ENCODE measurements at regions of chr4 and their contacts with region 1.

Region 1: DNA sequence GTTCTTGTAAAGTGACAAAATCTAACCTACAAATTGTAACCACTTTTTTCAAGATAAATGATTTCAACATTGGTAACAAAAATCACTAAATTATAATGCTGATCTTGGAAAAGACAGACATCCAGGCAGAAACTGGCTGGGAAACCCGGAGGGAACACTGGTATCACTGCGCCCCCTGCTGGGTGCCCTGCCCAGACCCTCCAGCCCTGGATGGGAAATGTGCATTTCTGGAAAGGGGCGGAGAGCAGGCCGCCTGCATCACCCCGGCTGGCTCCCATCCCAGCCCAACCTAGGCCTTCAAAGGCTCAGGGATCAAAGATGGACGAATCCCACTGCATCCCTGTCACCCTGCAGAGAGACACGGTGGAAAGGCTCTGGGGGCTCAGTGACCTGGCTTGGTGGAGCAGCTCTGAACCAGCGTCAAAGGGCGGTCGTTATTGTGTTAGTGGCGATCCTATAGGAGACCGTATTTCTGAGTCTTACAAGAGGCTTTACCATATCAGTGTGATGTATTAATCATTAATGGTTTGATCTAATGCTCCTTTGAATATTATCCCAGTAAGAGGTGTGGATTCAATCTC is 37.3 kb downstream of the ACOX3 start:
- DNase-seq: peak; percentile 88 to 91
- ATAC-seq: peak; percentile 71 to 93 (median 86)
- H3K4me3 ChIP-seq: no peak overlapping the region
- H3K27ac ChIP-seq: peak overlapping the region; percentile 21 to 92 (median 80)
- H3K4me1 ChIP-seq: peaks cover 10 to 46% (median 32%) of the 10 kb centered on the region in 9 donors
- H3K27me3 ChIP-seq: no peaks in the 10 kb centered on the region
- CTCF ChIP-seq: peak; percentile 83 to 99 (median 94)

Region 2: DNA sequence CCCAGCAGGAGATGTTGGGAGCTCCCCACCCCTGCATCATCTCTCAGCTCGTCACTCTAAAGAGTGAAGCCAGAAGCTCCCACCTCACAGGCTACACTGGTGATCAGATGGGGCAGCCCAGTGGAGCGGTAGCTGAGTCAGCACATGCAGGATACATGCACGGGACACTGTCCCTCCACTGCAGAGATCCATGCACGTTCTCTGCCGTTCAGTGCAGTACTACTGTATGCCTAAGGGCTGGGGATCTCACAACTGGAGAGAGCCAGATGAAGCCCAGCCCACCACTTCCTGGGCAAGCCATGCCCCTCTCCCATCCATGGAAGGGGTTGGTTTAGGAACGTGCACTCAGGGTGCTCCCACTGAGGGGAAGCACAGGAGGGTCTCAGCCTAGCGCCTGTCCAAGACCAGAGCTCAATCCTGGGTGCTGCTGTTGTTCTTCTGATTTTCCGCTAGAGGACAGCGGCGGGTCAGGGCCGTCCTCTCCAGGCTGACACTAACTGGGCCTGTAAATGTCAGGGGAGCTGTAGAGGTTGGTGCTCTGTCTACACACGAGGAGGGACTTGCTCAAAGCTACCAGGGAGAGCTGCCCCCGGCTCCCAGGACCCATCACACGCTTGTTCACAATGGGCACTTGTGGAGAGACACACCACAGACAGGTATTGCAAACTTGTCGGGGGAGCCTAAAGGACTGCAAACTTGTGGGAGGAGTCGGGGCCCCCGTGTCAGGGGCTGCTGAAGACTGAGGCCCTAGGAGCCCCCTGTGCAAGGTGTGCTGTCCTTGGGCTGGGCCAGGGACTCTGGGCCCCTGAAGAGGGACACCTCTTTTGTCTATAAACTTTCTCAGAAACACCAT is 226.5 kb before region 1 on chr4:
- intact Hi-C with region 1: loop called in 9 of 10 experiments (anchors 5 to 10 kb)
- DNase-seq: peak in 1 of 2 donors; percentile 51
- ATAC-seq: peak; percentile 71 to 88 (median 80)
- H3K4me3 ChIP-seq: no peak overlapping the region
- H3K27ac ChIP-seq: peak overlapping the region in 1 of 10 donors; percentile 12
- H3K4me1 ChIP-seq: peaks cover 5 to 35% (median 24%) of the 10 kb centered on the region in 9 donors
- H3K27me3 ChIP-seq: peaks cover 0 to 11% (median 0%) of the 10 kb centered on the region in 7 donors
- CTCF ChIP-seq: peak; percentile 75 to 91 (median 84)

Region 3: GRCh38 chr4:8267077-8267476 is 136.2 kb before region 1 on chr4:
- intact Hi-C with region 1: loop called in 8 of 10 experiments (anchors 2 to 10 kb)
- DNase-seq: peak; percentile 78 to 85
- ATAC-seq: peak; percentile 45 to 76 (median 70)
- H3K4me3 ChIP-seq: peak overlapping the region in 1 of 10 donors; percentile 3
- H3K27ac ChIP-seq: peak overlapping the region in 7 of 10 donors; percentile 4 to 50 (median 25)
- H3K4me1 ChIP-seq: peaks cover 19 to 50% (median 34%) of the 10 kb centered on the region in 9 donors
- H3K27me3 ChIP-seq: peaks cover 0 to 17% (median 0%) of the 10 kb centered on the region in 7 donors
- CTCF ChIP-seq: peak; percentile 71 to 86 (median 81)

Region 4: GRCh38 chr4:8274765-8275547 is 128.3 kb before region 1 on chr4:
- intact Hi-C with region 1: loop called in 4 of 10 experiments (anchors 2 to 10 kb)
- DNase-seq: peak; percentile 87 to 89
- ATAC-seq: peak; percentile 67 to 84 (median 78)
- H3K4me3 ChIP-seq: no peak overlapping the region
- H3K27ac ChIP-seq: peak overlapping the region in 8 of 10 donors; percentile 42 to 86 (median 70)
- H3K4me1 ChIP-seq: peaks cover 53 to 96% (median 72%) of the 10 kb centered on the region in 9 donors
- H3K27me3 ChIP-seq: peaks cover 0 to 12% (median 0%) of the 10 kb centered on the region in 7 donors
- CTCF ChIP-seq: peak in 8 of 9 donors; percentile 12 to 67 (median 34)

Region 5: GRCh38 chr4:8315435-8316250 is 87.6 kb before region 1 on chr4:
- intact Hi-C with region 1: loop called in 5 of 10 experiments (anchors 2 to 10 kb)
- DNase-seq: no peak
- ATAC-seq: peak in 6 of 8 donors; percentile 39 to 70 (median 60)
- H3K4me3 ChIP-seq: no peak overlapping the region
- H3K27ac ChIP-seq: peak overlapping the region in 7 of 10 donors; percentile 28 to 64 (median 54)
- H3K4me1 ChIP-seq: peaks cover 5 to 45% (median 26%) of the 10 kb centered on the region in 9 donors
- H3K27me3 ChIP-seq: no peaks in the 10 kb centered on the region
- CTCF ChIP-seq: no peak

Region 6: DNA sequence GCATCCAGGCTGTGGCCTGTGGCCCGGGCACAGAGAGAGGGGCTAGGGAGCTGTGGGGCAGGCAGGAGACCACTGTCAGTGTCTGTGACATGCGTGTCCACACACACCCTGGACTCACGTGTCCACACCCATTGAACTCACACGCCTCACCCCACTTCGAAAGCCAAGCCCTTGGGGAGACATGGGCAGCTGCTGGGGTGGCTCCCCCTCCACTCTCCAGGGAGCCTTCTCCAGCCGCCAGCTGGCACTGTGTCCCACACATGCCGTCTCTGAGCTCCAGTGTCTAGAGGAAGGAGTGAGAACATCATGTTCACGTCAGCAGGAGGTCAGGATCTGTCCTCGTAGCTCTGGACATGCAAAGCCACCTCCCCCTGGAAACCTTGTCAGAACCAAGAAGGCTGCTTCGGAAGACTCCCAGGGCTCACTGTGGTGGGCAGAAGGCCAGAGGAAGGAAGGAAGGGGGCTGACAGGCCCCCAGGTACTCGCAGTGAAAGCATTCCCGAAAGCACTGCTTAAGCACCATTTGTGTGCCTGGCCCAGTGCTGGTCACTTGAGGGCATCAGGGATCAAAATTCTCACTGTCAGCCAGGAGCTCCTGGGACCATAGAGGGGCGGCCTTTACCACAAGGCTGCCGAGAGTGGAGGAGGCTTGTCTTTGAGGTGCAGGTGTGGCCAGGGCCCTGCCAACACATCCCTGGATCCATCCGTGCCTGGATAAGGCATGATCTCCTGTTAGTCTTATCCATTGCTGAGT is 72.3 kb before region 1 on chr4:
- intact Hi-C with region 1: loop called in 5 of 10 experiments (anchors 5 to 10 kb)
- DNase-seq: peak; percentile 47 to 81
- ATAC-seq: peak; percentile 68 to 96 (median 92)
- H3K4me3 ChIP-seq: no peak overlapping the region
- H3K27ac ChIP-seq: peak overlapping the region in 9 of 10 donors; percentile 14 to 69 (median 53)
- H3K4me1 ChIP-seq: peaks cover 3 to 22% (median 16%) of the 10 kb centered on the region in 9 donors
- H3K27me3 ChIP-seq: no peaks in the 10 kb centered on the region
- CTCF ChIP-seq: peak in 6 of 9 donors; percentile 7 to 46 (median 37)